HCT116 (cell line): ENCODE measurements at regions of chr13 and their contacts with region 1.

Region 1: DNA sequence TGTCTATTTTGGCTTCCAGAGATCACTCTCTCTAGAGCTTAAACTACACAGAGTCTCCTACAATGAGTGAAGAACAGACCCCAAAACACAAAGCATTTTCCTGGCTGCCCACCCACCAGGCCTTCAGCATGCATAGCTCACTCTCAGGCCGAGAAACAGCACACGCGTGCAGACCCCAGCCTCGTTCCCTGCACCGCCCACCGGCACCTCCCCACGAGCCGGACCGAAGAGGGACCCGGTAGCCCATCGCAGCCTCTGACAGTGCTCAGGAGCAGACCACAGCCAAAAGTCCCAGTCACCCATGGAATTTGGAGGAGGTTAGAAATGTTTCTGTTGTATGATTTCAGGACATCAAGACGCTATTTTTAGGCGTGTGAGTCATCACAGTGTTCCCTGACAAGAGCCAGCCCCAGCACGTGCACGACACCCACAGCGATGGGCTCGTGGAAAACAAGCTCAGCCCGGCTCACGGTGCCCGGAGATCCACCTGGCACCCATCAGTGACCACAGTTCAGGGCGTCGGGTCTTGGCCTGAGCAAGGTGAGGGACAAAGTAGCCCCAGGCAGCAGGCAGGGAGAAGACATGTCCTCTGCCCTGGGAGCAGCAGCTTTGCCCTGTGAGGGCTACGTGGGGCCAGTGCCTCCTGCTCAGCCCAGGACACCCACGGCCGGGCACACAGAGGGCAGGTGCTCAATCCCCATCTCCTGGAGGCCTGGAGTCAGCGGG is 50.1 kb upstream of the SPACA7 start:
- DNase-seq: no peak
- ATAC-seq: no peak
- H3K4me3 ChIP-seq: no peak overlapping the region
- H3K27ac ChIP-seq: no peak overlapping the region
- H3K4me1 ChIP-seq: peaks cover 4 to 5% of the 10 kb centered on the region in 2 experiments; a peak in 3 of 4 replicates
- H3K27me3 ChIP-seq: peaks cover 21% of the 10 kb centered on the region; the same call in 1 of the 2 replicates
- CTCF ChIP-seq: no peak
- POLR2A ChIP-seq: no peak
- RAD21 ChIP-seq: no peak

Region 2: DNA sequence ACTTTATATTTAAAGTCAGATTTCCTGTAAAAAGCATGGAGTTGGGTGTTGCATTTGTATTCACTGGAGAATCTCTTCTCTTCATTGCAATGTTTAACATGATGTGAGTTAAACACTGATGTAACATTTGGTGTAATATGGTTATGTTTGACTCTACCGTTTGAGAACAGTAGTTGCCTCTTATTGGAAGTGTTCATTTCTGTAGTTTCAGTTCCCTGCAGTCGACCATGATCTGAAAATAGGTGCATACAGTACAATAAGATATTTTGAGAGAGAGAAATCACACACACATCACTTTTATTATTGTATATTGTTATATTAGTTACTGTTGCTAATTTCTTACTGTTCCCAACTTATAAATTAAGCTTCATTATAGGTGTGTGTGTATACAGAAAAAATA is 55.1 kb before region 1 on chr13:
- CTCF ChIA-PET with region 1: no interaction called
- POLR2A ChIA-PET with region 1: no interaction called
- RAD21 ChIA-PET with region 1: no interaction called
- intact Hi-C with region 1: loop called (anchors 10 kb)
- DNase-seq: no peak
- ATAC-seq: no peak
- H3K4me3 ChIP-seq: no peak overlapping the region
- H3K27ac ChIP-seq: no peak overlapping the region
- H3K4me1 ChIP-seq: no peaks in the 10 kb centered on the region
- H3K27me3 ChIP-seq: peaks cover 11% of the 10 kb centered on the region; the same call in 1 of the 2 replicates
- CTCF ChIP-seq: no peak
- POLR2A ChIP-seq: no peak
- RAD21 ChIP-seq: no peak

Region 3: GRCh38 chr13:112443995-112444860 is 118.1 kb after region 1 on chr13:
- CTCF ChIA-PET with region 1: no interaction called
- POLR2A ChIA-PET with region 1: no interaction called
- RAD21 ChIA-PET with region 1: no interaction called
- intact Hi-C with region 1: no loop called
- DNase-seq: peak; percentile 34
- ATAC-seq: peak; percentile 95
- H3K4me3 ChIP-seq: no peak overlapping the region
- H3K27ac ChIP-seq: no peak overlapping the region
- H3K4me1 ChIP-seq: no peaks in the 10 kb centered on the region
- H3K27me3 ChIP-seq: no peaks in the 10 kb centered on the region
- CTCF ChIP-seq: peak; percentile 86 to 96 (median 90)
- POLR2A ChIP-seq: no peak
- RAD21 ChIP-seq: peak; percentile 97